ENCODE measurements at regions of chr3 and their contacts with region 1.

Region 1: DNA sequence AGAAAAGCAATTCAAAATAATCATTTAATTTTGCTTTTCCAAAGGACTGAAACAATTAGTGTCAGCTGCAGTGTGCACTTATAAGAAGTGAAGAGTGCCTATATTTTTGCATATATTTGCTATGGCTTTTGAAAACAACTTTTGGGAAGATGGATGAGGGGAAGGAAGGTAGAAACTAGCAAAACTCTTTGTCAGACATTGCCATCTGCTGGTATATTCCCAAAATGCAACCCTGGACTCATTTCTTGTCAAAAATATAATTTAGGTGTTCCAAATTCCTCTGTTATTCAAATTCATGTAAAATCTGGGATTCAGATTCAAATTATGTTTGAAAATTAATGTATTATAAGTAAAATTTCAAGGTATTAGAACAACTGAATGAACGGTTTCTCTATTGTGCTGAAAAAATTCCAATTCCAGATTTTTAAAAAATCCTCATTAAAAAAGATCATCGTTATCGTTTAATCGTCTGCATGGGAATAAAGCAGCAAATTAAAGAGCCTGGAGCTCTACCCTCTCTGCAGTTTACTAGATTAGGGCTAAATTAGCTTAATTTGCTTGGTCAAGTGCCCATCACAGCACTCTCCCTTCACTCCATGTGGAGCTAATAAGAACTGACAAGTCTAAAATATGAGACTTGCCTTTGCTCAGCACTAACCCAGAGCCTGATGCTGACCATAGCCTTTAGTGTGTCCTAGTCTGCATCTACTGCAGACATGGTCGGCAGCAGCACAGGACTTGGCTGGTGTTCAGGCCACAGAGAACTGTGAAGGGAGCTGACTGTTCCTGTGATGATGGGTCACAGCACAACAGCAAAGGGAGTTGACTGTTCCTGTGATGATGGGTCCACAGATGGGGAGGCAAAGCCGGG is 67.9 kb upstream of the MITF start:
- DNase-seq: peak; percentile 31 to 64 (median 48)
- H3K4me3 ChIP-seq: no peak overlapping the region
- H3K27ac ChIP-seq: no peak overlapping the region
- H3K4me1 ChIP-seq: peaks cover 0 to 2% (median 0%) of the 10 kb centered on the region in 4 experiments
- H3K27me3 ChIP-seq: no peaks in the 10 kb centered on the region

Region 2: GRCh38 chr3:69451594-69451993 is 219.7 kb before region 1 on chr3:
- CTCF ChIA-PET with region 1: interaction called, 21 read pairs
- POLR2A ChIA-PET with region 1: no interaction called
- DNase-seq: peak; percentile 24 to 57 (median 44)
- H3K4me3 ChIP-seq: no peak overlapping the region
- H3K27ac ChIP-seq: no peak overlapping the region
- H3K4me1 ChIP-seq: no peaks in the 10 kb centered on the region
- H3K27me3 ChIP-seq: no peaks in the 10 kb centered on the region

Region 3: DNA sequence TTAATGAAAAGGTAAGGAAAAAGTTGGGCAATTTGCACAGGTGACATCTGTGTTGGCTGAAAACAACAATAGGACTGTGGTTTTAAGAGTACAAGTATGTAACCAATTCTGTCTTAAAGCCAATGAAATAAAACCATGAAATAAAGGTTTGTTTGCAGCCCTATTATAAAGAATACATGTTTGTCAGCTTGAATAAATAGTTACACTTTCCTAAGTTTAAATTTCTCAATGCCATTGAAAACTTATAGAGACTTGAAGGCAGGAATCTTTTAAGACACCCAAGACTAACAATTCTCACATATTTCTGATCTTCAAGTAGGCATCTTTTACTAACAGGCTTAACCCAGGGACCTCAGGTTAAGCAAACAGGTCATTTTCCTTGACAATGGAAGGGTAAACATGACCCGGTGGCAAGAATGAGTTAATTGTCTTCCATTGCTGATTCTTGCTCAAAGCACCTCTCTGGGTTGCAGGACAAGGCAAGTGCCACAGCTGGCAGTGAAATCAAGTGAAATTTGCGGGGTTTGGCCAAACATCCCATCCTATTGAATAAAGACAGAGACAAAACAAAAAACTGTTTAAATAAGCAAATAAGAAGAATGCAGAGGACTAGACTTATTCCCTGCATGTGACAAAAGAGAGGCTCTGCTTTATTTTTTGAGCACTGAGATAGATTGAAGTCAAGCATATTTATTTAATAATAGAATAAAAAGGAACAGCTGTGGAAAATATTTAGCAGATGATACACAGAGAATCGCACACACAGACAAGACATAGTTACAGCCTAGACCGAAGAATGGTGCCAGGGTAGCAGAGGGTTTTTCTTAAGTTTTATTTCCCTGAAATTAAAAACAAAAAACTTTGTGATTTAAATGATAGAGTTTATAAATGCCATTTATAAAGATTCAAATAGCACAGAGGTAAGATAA is 11.8 kb after region 1 on chr3:
- CTCF ChIA-PET with region 1: interaction called, 10 read pairs
- POLR2A ChIA-PET with region 1: no interaction called
- DNase-seq: no peak
- H3K4me3 ChIP-seq: no peak overlapping the region
- H3K27ac ChIP-seq: no peak overlapping the region
- H3K4me1 ChIP-seq: no peaks in the 10 kb centered on the region
- H3K27me3 ChIP-seq: peaks cover 0 to 2% (median 0%) of the 10 kb centered on the region in 5 experiments

Region 4: GRCh38 chr3:69906351-69906966 is 235.1 kb after region 1 on chr3:
- CTCF ChIA-PET with region 1: no interaction called
- POLR2A ChIA-PET with region 1: no interaction called
- DNase-seq: no peak
- H3K4me3 ChIP-seq: no peak overlapping the region
- H3K27ac ChIP-seq: no peak overlapping the region
- H3K4me1 ChIP-seq: no peaks in the 10 kb centered on the region
- H3K27me3 ChIP-seq: no peaks in the 10 kb centered on the region